Right cardiac atrium (tissue), 5 donors: ENCODE measurements at regions of chr16 and their contacts with region 1.

Region 1: DNA sequence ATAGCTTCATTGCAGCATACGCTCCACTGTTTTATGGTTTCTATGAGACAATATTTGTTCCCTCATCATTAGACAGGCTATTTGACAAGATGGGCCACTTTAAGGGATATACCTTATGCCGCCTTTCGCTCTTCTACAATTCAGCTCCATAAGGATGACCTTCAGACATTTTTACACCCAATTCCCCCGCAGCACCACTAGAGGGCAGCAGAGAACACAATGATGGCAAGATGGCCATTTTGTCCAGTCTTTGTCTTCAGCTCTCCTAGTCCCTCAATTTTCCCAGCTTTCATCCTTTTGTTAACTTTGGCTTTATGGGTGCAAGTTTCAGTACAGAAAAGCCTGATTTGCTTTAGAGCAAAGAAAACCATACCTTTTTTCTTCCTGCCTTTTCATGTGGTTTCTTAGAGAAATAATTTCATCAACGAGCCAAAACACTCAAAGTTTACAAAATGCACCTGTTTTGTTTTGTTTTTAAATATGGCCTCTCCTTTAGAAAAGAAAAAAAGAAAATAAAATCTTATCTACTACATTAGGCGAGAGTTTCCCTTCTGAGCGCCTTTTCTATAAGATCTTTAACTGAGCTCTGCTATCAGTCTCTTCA is 355.3 kb downstream of the TOX3 start:
- DNase-seq: peak; percentile 25 to 75 (median 70)
- ATAC-seq: peak; percentile 43 to 60
- H3K4me3 ChIP-seq: no peak overlapping the region
- H3K27ac ChIP-seq: no peak overlapping the region
- H3K4me1 ChIP-seq: no peaks in the 10 kb centered on the region
- H3K27me3 ChIP-seq: no peaks in the 10 kb centered on the region

Region 2: GRCh38 chr16:52351451-52351850 is 159.8 kb after region 1 on chr16:
- intact Hi-C with region 1: no loop called
- DNase-seq: no peak
- ATAC-seq: no peak
- H3K4me3 ChIP-seq: no peak overlapping the region
- H3K27ac ChIP-seq: no peak overlapping the region
- H3K4me1 ChIP-seq: no peaks in the 10 kb centered on the region
- H3K27me3 ChIP-seq: no peaks in the 10 kb centered on the region

Region 3: GRCh38 chr16:52912565-52913173 is 721.0 kb after region 1 on chr16:
- intact Hi-C with region 1: loop called in 2 of 4 experiments (anchors 2 to 10 kb)
- DNase-seq: peak; percentile 55 to 71 (median 62)
- ATAC-seq: peak; percentile 55 to 63
- H3K4me3 ChIP-seq: no peak overlapping the region
- H3K27ac ChIP-seq: no peak overlapping the region
- H3K4me1 ChIP-seq: no peaks in the 10 kb centered on the region
- H3K27me3 ChIP-seq: no peaks in the 10 kb centered on the region

Region 4: GRCh38 chr16:53022374-53022773 is 830.7 kb after region 1 on chr16:
- intact Hi-C with region 1: loop called in 1 of 4 experiments (anchors 5 kb)
- DNase-seq: peak; percentile 25 to 47 (median 46)
- ATAC-seq: peak; percentile 70 to 91
- H3K4me3 ChIP-seq: no peak overlapping the region
- H3K27ac ChIP-seq: no peak overlapping the region
- H3K4me1 ChIP-seq: no peaks in the 10 kb centered on the region
- H3K27me3 ChIP-seq: no peaks in the 10 kb centered on the region